CD4-positive, alpha-beta T cell (primary cell): ENCODE measurements at regions of chr9 and their contacts with region 1.

Region 1: DNA sequence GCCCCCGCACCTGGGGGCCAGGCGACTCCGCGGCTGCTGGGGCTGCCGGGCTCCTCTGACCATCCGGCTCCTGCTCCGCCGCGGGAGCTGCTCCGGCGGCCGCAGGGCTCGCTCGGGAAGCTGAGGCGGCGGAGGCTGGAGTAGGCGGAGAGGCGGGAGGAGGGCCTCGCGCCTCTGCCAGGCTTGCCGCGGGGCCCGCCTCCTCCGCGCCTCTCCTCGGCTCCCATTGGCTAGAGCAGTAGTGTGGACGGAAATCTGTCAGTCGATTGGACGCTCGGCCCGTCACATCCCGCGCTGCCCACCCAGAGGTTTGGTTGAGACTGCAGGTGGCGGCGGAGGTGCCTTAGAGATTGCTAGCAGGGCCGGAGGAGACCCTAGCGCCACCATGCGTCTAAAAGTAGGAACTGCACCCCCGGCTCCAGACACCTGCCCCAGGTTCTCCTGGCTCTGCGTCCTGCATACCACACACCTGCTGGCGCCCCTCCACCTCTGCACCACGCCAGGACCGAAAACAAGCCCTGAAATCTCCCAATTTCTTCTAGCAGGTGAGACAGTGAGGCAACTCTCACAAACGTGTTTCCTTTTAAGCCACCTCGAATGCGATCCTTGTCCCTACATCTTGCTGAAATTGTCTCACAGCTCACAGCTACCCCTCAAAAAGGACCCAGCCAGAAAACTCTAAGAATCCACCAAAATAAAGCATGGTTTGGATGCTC is at the start of gene SCAI:
- DNase-seq: peak; percentile 96 to 99 (median 98)
- ATAC-seq: peak; percentile 98
- H3K4me3 ChIP-seq: peak within 1 kb of the TSS; percentile 54
- H3K4me3 Mint-ChIP-seq: peak within 1 kb of the TSS; percentile 94
- H3K27ac ChIP-seq: no peak within 1 kb of the TSS
- H3K27ac Mint-ChIP-seq: peak within 1 kb of the TSS; percentile 75
- H3K4me1 ChIP-seq: peaks cover 21% of the 10 kb centered on the region
- H3K4me1 Mint-ChIP-seq: peaks cover 38% of the 10 kb centered on the region
- H3K27me3 ChIP-seq: no peaks in the 10 kb centered on the region
- H3K27me3 Mint-ChIP-seq: no peaks in the 10 kb centered on the region
- CTCF ChIP-seq: peak; percentile 97
- total RNA-seq, gene SCAI: 11.6 to 13.4 TPM

Region 2: DNA sequence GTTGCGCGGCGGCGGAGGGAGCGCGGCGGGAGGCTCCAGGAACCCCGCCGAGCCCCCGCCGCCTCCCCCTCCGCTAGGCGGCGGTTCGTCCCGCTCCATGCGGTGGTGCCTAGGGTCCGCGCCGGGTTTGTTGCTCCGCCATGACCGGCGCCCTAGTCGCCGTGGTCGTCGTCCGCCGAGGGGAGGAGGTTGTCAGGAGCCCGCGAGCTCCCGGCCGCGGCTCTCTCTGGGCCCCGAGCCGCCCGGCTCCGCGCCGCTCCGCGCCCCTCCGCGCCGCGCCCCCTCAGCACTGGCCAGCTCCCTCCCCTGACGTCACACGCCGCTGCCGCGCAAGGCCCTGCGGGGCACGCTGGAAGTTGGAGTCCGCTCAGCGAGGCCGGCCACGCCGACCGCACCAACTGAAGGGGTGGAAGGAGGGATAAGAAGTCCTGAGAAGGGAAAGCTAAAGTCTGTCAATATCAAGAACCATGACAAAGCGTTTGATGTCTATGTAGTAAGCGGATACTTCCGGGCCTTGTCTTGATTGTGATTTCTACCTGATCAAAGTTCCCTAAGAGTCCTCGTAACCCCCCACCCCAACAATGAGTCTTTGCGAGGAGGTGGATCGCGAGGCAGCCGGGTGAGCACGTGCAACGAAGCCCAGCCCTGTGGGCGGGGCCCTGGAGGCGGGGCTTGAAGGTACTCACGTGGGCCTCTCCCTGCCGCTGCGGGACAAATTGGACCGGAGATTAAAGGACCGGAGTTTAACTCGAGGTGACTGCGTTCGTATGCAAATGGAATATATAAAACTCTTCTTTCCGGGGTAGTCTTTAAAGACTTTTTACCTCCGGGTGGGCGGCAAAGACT is 372.3 kb before region 1 on chr9 and contains the start of gene NR6A1:
- CTCF ChIA-PET with region 1: no interaction called
- POLR2A ChIA-PET with region 1: no interaction called
- intact Hi-C with region 1: loop called (anchors 1 to 2 kb)
- DNase-seq: peak; percentile 81 to 97 (median 90)
- ATAC-seq: peak; percentile 88
- H3K4me3 ChIP-seq: peak within 1 kb of the TSS; percentile 59
- H3K4me3 Mint-ChIP-seq: peak within 1 kb of the TSS; percentile 90
- H3K27ac ChIP-seq: no peak within 1 kb of the TSS
- H3K27ac Mint-ChIP-seq: peak within 1 kb of the TSS; percentile 32
- H3K4me1 ChIP-seq: peaks cover 32% of the 10 kb centered on the region
- H3K4me1 Mint-ChIP-seq: peaks cover 39% of the 10 kb centered on the region
- H3K27me3 ChIP-seq: peaks cover 34 to 71% of the 10 kb centered on the region in 2 experiments
- H3K27me3 Mint-ChIP-seq: peaks cover 87% of the 10 kb centered on the region
- CTCF ChIP-seq: no peak
- total RNA-seq, gene NR6A1: not detected

Region 3: DNA sequence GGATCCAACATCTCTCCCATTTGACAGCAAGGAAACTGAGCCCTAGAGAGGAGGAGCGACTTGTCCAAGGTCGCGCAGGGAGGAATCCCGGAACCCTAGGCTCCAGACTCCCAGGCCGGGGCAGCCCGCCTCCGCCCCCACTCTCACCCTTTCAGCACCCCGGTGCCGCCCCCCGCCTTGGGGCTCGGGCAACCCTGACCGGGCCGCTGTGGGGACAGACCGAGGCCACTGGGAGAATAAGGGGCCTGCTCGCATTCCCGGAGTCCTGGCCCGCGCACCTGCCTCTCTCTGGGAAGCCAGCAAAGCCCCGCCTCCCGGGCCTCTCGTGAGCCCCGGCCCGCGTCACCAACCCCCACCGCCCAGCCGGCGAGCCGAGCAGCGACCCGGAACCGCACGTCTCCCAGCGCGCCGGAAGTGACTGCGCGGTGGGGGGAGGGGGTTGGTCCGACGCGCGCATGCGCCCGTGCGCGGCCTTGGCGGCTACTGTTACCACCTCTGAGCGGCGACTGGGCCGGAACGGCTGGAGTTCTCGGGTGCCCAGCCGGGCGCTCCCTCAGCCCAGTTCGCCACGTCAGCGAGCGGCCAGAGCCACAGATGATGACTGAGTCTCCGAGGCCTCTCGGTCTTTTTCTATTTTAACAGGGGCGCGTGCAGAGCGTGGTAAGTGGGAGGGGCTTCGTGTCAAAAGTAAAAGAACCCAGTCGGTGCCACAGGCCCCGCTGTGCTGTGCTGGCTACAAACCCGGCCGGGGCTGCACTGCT is 202.7 kb before region 1 on chr9 and contains the start of gene GOLGA1:
- CTCF ChIA-PET with region 1: no interaction called
- POLR2A ChIA-PET with region 1: interaction called, 4 read pairs
- intact Hi-C with region 1: loop called (anchors 1 kb)
- DNase-seq: peak; percentile 86 to 98 (median 91)
- ATAC-seq: peak; percentile 84
- H3K4me3 ChIP-seq: peak within 1 kb of the TSS; percentile 96
- H3K4me3 Mint-ChIP-seq: peak within 1 kb of the TSS; percentile 94
- H3K27ac ChIP-seq: peak within 1 kb of the TSS; percentile 90 to 95
- H3K27ac Mint-ChIP-seq: peak within 1 kb of the TSS; percentile 90
- H3K4me1 ChIP-seq: peaks cover 20% of the 10 kb centered on the region
- H3K4me1 Mint-ChIP-seq: peaks cover 23% of the 10 kb centered on the region
- H3K27me3 ChIP-seq: no peaks in the 10 kb centered on the region
- H3K27me3 Mint-ChIP-seq: no peaks in the 10 kb centered on the region
- CTCF ChIP-seq: no peak
- total RNA-seq, gene GOLGA1: 12.9 to 22.2 TPM

Region 4: DNA sequence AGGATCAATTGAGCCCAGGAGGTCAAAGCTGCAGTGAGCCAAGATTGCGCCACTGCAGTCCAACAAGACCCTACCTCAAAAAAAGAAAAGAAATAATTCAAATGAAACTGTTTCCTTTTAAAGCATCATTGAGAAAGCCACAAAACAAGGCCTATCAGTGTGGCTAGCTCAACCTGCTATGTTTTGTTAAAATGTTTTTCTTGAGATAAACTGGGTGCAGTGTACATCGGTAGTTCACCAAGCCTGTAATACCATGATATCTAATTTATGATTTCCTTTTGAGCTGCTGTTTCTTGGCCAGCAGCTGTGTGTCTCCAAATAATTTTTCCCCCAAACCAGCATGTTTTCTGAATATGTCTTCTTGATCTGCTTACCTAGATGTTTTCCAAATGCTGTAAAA is 105.4 kb before region 1 on chr9:
- CTCF ChIA-PET with region 1: no interaction called
- POLR2A ChIA-PET with region 1: no interaction called
- intact Hi-C with region 1: loop called in 1 of 2 experiments (anchors 10 kb)
- DNase-seq: no peak
- ATAC-seq: no peak
- H3K4me3 ChIP-seq: no peak overlapping the region
- H3K4me3 Mint-ChIP-seq: no peak overlapping the region
- H3K27ac ChIP-seq: no peak overlapping the region
- H3K27ac Mint-ChIP-seq: no peak overlapping the region
- H3K4me1 ChIP-seq: no peaks in the 10 kb centered on the region
- H3K4me1 Mint-ChIP-seq: no peaks in the 10 kb centered on the region
- H3K27me3 ChIP-seq: no peaks in the 10 kb centered on the region
- H3K27me3 Mint-ChIP-seq: no peaks in the 10 kb centered on the region
- CTCF ChIP-seq: no peak

Region 5: GRCh38 chr9:125126019-125126746 is 17.4 kb before region 1 on chr9:
- CTCF ChIA-PET with region 1: interaction called, 7 read pairs
- POLR2A ChIA-PET with region 1: interaction called, 14 read pairs
- intact Hi-C with region 1: loop called in 1 of 2 experiments (anchors 1 kb)
- DNase-seq: peak; percentile 66 to 94 (median 78)
- ATAC-seq: peak; percentile 99
- H3K4me3 ChIP-seq: no peak overlapping the region
- H3K4me3 Mint-ChIP-seq: peak overlapping the region; percentile 83
- H3K27ac ChIP-seq: peak overlapping the region in 1 of 2 donors; percentile 6
- H3K27ac Mint-ChIP-seq: peak overlapping the region; percentile 89
- H3K4me1 ChIP-seq: peaks cover 30% of the 10 kb centered on the region
- H3K4me1 Mint-ChIP-seq: peaks cover 44% of the 10 kb centered on the region
- H3K27me3 ChIP-seq: no peaks in the 10 kb centered on the region
- H3K27me3 Mint-ChIP-seq: no peaks in the 10 kb centered on the region
- CTCF ChIP-seq: no peak

Region 6: GRCh38 chr9:125189361-125190289 is 46.1 kb after region 1 on chr9 and contains the start of gene PPP6C:
- CTCF ChIA-PET with region 1: interaction called, 5 read pairs
- POLR2A ChIA-PET with region 1: interaction called, 9 read pairs
- intact Hi-C with region 1: loop called in 1 of 2 experiments (anchors 1 kb)
- DNase-seq: peak; percentile 95 to 99 (median 97)
- ATAC-seq: peak; percentile 92
- H3K4me3 ChIP-seq: peak within 1 kb of the TSS; percentile 100
- H3K4me3 Mint-ChIP-seq: peak within 1 kb of the TSS; percentile 91
- H3K27ac ChIP-seq: peak within 1 kb of the TSS; percentile 95 to 98
- H3K27ac Mint-ChIP-seq: peak within 1 kb of the TSS; percentile 96
- H3K4me1 ChIP-seq: peaks cover 77% of the 10 kb centered on the region
- H3K4me1 Mint-ChIP-seq: peaks cover 73% of the 10 kb centered on the region
- H3K27me3 ChIP-seq: no peaks in the 10 kb centered on the region
- H3K27me3 Mint-ChIP-seq: no peaks in the 10 kb centered on the region
- CTCF ChIP-seq: peak; percentile 63
- total RNA-seq, gene PPP6C: 32.9 to 35.3 TPM